Left colon (tissue), 2 donors: ENCODE measurements at regions of chr10 and their contacts with region 1.

Region 1: DNA sequence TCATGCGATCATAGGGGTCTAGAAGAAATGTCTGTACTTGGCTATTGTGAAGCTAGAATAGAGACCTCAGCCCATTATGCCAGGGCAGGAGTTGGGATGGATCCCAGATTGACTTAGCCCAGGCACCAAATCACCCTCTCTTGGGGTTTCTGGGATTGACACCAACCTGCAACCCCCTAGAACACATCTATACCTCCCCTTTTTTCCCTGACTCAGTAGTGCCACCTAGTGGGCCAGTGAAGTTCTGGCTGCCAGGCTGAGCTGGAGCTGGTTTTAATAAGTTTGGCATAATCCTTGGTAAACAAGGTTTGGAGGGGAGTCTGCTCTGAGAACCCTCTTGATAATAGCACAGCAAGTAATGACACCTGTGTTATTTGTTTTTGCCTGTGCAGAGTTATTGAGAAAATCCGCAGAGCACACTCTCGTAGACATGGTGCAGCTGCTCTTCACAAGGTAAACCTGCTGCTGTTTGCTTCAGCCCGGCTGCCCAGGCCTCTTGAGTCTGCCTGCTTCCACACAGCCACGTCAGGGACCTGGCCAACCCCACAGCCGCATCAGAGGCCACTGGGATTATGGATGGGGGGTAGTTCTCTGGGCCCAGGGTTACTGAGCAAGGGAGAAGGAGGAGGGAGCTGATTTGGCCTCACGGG is 43.3 kb upstream of the NFKB2 start:
- DNase-seq: peak; percentile 33 to 60
- ATAC-seq: peak; percentile 65

Region 2: DNA sequence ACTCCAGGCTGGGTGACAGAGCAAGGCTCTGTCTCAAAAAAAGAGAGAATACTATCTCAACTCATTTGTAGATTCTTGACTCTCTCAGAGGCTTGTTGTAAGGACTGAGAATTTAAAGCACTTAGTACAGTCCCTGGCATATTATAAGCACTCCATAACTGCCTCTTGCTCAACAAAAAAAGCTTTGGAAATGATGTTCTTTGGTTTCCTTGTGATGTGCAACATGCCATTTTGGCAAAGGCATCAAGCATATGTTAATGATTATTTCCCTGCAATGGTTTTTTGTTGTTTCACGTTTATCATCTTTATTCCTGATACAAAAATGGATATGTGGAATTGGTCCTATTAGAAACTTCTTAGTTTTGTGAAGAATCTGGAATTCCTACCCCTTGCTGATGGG is 184.3 kb before region 1 on chr10:
- intact Hi-C with region 1: loop called in 1 of 2 experiments (anchors 10 kb)
- DNase-seq: no peak
- ATAC-seq: no peak

Region 3: GRCh38 chr10:102225646-102226541 is 126.3 kb before region 1 on chr10 and contains the start of gene ELOVL3:
- intact Hi-C with region 1: loop called in 1 of 2 experiments (anchors 5 kb)
- DNase-seq: peak; percentile 93 to 94
- ATAC-seq: peak; percentile 93
- total RNA-seq, gene ELOVL3: not detected

Region 4: DNA sequence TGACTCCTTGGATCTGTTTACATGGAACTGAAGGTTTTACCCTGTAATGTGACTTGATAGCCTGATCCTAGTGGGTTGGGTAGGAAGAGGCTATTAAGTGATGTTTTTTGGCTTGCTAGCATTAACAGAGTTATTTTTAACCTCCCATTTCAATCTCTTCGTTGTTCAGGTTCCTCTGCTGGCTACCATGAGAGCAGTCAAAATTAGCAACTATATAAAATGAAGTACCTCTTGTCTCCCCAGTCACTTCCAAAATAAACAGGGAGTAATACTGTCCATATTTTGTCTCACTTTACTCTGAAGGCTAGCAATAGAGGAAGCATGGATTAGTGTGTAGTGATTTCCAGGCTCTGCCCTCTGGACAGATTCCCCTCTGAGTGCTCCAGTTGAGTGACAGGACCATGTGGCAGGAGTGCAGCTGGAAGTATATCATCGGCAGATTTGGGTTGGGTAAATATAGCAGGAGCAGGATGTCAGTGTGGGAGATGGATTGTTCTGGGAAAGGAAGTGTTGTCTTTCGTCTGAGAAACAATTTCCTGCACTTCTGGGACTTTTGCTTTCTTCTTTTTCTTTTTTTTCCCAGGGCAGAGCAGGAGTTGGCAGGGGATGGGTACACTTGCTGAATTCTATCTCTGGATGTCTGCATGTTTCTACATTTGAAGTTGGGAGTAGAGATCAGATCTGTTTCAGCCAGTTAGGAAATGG is 71.6 kb before region 1 on chr10:
- intact Hi-C with region 1: no loop called
- DNase-seq: no peak
- ATAC-seq: peak; percentile 42